GM10248 (cell line): ENCODE measurements at regions of chr3 and their contacts with region 1.

Region 1: DNA sequence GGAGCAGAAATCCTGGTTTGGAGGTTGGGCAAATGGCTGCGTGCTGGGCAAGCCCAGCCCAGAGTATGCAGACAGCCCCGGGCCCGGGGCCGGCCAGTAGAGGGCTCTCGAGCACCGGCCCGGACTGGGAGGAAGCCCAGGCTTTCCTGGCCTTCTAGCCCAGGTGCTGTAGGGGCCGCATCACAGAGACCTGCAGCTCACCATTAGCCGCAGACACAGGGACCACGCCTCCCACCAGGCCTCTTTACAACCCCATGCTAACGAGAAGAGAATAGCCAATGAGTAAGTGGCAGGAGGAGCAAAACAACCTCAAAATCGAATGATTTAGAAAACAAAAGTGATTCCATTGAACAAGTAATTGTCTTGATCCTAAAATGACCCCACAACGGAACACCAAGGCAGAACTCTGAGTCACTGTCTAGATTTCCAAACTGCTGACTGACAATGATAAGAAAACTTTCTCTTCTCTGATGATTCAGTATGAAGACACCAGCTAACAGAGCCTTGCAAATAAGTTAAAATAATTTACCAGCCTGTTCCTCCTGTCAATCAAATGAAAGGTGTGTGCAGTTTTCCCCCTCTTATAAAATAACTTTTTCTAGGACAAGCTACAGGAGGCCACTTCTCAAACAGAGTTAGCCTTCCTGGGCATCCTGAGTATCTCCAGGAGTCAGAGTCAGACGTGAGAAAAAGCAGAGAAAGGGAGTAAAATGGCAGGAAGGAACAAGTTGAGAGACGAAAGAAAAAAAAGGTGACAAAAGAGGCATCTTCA is 102.2 kb downstream of the DGKG start:
- DNase-seq: peak; percentile 86
- CTCF ChIP-seq: peak; percentile 97

Region 2: GRCh38 chr3:185992831-185993374 is 266.9 kb before region 1 on chr3:
- CTCF ChIA-PET with region 1: interaction called, 12 read pairs
- POLR2A ChIA-PET with region 1: no interaction called
- DNase-seq: no peak
- CTCF ChIP-seq: no peak

Region 3: GRCh38 chr3:186247821-186248814 is 11.7 kb before region 1 on chr3:
- CTCF ChIA-PET with region 1: interaction called, 39 read pairs
- POLR2A ChIA-PET with region 1: no interaction called
- DNase-seq: no peak
- CTCF ChIP-seq: no peak

Region 4: GRCh38 chr3:186520957-186521842 is 261.4 kb after region 1 on chr3:
- CTCF ChIA-PET with region 1: interaction called, 14 read pairs
- POLR2A ChIA-PET with region 1: no interaction called
- DNase-seq: peak; percentile 59
- CTCF ChIP-seq: no peak